ENCODE measurements at regions of chr5 and their contacts with region 1.

Region 1: DNA sequence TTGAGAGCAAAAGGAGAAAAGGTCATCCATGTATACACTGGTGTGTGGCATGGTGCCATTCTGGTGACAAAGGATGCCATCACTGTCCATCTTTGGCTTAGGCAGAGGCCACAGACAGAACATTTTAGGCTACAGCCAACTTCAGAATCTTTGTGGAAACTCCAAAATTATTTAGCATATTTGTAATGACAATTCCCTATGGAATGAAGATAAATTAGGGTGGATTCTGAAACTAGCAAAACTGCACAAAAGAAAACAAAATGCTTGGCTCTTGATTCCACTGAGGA is 92.5 kb downstream of the FBXW11 start:
- DNase-seq: no peak
- ATAC-seq: no peak
- H3K4me3 Mint-ChIP-seq: no peak overlapping the region
- H3K27ac Mint-ChIP-seq: no peak overlapping the region
- H3K4me1 Mint-ChIP-seq: peaks cover 23% of the 10 kb centered on the region
- H3K27me3 Mint-ChIP-seq: no peaks in the 10 kb centered on the region

Region 2: DNA sequence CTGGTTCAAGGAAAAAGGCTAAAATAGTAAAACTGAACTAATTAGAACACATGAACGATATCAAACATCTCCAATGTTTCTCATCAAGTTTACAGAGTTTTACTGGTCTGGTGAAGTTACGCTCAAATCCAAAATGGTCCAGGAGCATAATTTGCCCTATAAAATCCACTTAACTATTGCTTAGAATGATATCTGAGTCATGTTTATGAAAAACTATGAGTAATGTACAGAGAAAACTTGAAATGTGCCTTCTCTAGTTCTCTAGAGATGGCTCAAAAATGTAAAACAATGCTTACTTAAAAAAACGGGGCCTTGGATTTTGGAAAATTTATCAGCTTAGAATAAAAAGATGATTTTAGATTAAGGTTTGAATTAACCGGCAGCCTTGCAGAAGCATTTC is 15.5 kb before region 1 on chr5:
- CTCF ChIA-PET with region 1: interaction called, 16 read pairs
- POLR2A ChIA-PET with region 1: no interaction called
- DNase-seq: no peak
- ATAC-seq: no peak
- H3K4me3 Mint-ChIP-seq: no peak overlapping the region
- H3K27ac Mint-ChIP-seq: no peak overlapping the region
- H3K4me1 Mint-ChIP-seq: peaks cover 13% of the 10 kb centered on the region
- H3K27me3 Mint-ChIP-seq: no peaks in the 10 kb centered on the region

Region 3: GRCh38 chr5:171997024-171997423 is 83.1 kb after region 1 on chr5:
- CTCF ChIA-PET with region 1: interaction called, 12 read pairs
- POLR2A ChIA-PET with region 1: no interaction called
- DNase-seq: no peak
- ATAC-seq: no peak
- H3K4me3 Mint-ChIP-seq: no peak overlapping the region
- H3K27ac Mint-ChIP-seq: no peak overlapping the region
- H3K4me1 Mint-ChIP-seq: peaks cover 25% of the 10 kb centered on the region
- H3K27me3 Mint-ChIP-seq: no peaks in the 10 kb centered on the region

Region 4: DNA sequence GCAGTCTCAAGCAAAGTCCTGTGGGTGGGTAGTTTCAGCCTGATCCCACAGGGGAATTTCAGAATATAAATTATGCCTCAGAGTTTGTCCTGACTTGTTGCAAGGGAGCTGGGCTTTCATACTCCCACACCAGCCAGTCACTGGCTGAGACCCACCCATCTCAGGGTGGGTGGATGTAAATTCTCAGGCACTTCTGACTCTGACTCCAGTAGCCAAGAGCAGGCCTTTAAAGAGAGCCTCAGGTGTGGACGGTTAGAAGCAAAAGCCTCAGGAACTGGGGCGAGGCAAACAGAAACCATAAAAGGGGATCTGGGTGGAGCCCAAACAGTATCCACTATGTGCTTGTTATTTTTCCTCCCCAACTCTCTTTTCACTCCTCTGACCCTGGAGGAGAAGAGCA is 121.1 kb after region 1 on chr5:
- CTCF ChIA-PET with region 1: interaction called, 80 read pairs
- POLR2A ChIA-PET with region 1: no interaction called
- DNase-seq: no peak
- ATAC-seq: peak; percentile 32
- H3K4me3 Mint-ChIP-seq: no peak overlapping the region
- H3K27ac Mint-ChIP-seq: no peak overlapping the region
- H3K4me1 Mint-ChIP-seq: peaks cover 11% of the 10 kb centered on the region
- H3K27me3 Mint-ChIP-seq: peaks cover 3% of the 10 kb centered on the region

Region 5: DNA sequence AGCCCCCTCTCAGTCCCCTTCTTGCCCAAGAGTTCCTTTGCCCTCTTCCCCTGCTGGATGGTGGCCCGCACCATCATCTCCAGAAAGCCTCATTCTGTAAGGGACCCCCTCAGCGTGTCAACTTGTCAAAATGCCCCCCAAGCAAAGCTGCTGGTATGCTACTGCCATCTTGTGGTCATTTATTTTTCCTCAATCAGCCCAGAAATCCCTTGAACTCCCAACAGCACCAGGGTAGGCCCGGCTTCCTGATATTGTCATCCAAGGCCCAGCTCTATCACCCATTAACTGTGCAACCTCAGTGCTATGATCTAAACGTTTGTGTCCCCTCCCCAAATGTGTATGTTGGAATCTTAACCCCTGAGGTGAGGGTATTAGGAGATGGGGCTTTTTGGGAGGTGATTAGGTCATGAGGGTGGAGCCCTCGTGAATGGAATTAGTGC is 145.8 kb after region 1 on chr5:
- CTCF ChIA-PET with region 1: interaction called, 39 read pairs
- POLR2A ChIA-PET with region 1: no interaction called
- DNase-seq: no peak
- ATAC-seq: peak; percentile 45
- H3K4me3 Mint-ChIP-seq: no peak overlapping the region
- H3K27ac Mint-ChIP-seq: peak overlapping the region; percentile 65
- H3K4me1 Mint-ChIP-seq: peaks cover 17% of the 10 kb centered on the region
- H3K27me3 Mint-ChIP-seq: no peaks in the 10 kb centered on the region

Region 6: GRCh38 chr5:172293054-172293744 is 379.3 kb after region 1 on chr5:
- CTCF ChIA-PET with region 1: interaction called, 13 read pairs
- POLR2A ChIA-PET with region 1: no interaction called
- DNase-seq: peak; percentile 77
- ATAC-seq: peak; percentile 100
- H3K4me3 Mint-ChIP-seq: no peak overlapping the region
- H3K27ac Mint-ChIP-seq: no peak overlapping the region
- H3K4me1 Mint-ChIP-seq: peaks cover 6% of the 10 kb centered on the region
- H3K27me3 Mint-ChIP-seq: peaks cover 10% of the 10 kb centered on the region